ENCODE measurements at regions of chr13 and their contacts with region 1.

Region 1: DNA sequence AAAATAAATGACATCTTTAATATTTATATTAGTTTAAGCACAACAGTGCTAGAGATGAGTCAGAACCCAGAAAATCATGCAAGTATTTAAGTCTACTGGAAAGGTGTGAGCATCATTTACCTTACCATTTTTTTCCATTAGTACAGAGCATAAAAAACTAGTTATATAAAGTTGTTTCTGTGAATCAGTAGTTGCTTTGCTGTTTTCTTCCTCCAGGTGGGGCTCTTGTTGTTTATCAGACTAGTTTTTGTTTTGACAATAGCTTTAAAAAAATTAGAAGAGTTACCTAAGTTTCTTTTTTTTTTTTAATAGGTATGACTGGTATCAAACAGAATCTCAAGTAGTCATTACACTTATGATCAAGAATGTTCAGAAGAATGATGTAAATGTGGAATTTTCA is 12.7 kb downstream of the SUGT1 start:
- DNase-seq: peak in 2 of 4 experiments; percentile 7 to 8
- ATAC-seq: no peak
- H3K4me3 ChIP-seq: no peak overlapping the region
- H3K27ac ChIP-seq: no peak overlapping the region
- H3K4me1 ChIP-seq: no peaks in the 10 kb centered on the region
- H3K27me3 ChIP-seq: no peaks in the 10 kb centered on the region
- CTCF ChIP-seq: peak in 1 of 3 experiments; percentile 43; a peak in 2 of 6 replicates
- EP300 ChIP-seq: no peak
- POLR2A ChIP-seq: no peak
- RAD21 ChIP-seq: peak; percentile 33 to 47; a peak in 3 of 4 replicates

Region 2: DNA sequence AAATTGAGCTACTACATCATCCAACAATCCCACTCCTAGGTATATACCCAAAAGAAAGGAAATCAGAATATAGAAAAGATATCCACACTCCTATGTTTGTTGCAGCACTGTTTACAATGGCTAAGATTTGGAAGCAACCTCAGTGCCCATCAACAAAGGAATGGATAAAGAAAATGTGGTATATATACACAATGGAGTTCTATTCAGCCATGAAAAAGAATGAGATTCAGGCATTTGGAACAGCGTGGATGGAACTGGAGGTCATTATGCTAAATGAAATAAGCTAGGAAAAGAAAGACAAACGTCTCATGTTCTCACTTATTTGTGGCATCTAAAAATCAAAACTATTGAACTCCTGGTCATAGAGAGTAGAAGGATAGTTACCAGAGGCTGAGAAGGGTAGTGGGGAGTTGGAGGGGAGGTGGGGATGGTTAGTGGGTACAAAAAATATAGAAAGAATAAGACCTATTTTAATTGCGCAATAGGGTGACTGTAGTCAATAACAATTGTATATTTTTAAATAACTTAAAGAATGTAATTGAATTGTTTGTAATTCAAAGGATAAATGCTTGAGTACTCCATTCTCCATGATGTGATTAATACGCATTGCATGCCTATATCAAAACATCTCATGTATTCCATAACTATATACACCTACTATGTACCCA is 50.1 kb before region 1 on chr13:
- CTCF ChIA-PET with region 1: no interaction called
- POLR2A ChIA-PET with region 1: no interaction called
- in situ Hi-C with region 1: no loop called
- intact Hi-C with region 1: no loop called
- DNase-seq: no peak
- ATAC-seq: no peak
- H3K4me3 ChIP-seq: no peak overlapping the region
- H3K27ac ChIP-seq: no peak overlapping the region
- H3K4me1 ChIP-seq: no peaks in the 10 kb centered on the region; a peak in 2 of 5 replicates
- H3K27me3 ChIP-seq: no peaks in the 10 kb centered on the region
- CTCF ChIP-seq: no peak
- EP300 ChIP-seq: no peak
- POLR2A ChIP-seq: no peak
- RAD21 ChIP-seq: no peak

Region 3: DNA sequence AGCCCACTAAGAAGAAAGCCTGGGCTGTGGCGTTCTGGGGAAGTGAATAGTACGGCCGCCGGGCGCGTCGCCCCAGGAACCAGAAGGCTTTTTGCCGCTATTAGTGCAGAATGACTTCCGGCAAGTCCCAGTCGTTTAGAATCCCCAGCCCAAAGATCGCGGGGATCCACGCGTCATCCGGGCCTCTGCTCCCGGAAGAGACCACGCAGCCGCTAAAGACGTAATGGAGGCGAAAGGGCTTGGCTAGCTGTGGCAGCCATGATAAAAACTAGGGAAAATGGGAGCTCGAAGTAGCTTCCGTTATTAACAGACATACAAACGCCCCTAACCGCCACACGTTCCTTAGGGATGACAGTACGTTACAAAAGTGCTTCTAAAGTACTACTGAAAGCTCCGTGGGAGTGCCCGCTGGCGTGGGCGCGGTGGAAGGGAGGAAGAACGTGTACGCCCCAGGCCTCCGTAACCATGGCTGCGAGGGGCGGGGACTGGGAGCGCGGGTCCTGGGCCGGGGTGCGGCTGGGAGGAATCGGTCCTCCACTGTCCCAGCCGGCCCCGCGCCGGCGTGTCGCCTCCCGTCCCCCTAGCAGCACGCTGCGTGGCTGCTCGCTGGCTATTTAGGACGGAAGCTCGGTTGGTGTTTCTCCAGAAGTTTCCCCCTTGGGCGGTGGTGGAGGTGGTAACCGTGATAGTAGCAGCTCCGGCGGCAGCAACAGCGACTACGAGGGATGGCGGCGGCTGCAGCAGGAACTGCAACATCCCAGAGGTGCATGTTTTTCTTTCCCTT is 12.9 kb before region 1 on chr13 and contains the start of gene SUGT1:
- CTCF ChIA-PET with region 1: no interaction called
- POLR2A ChIA-PET with region 1: interaction called, 24 read pairs
- in situ Hi-C with region 1: no loop called
- intact Hi-C with region 1: no loop called
- DNase-seq: peak; percentile 79 to 95 (median 82)
- ATAC-seq: peak; percentile 96
- H3K4me3 ChIP-seq: peak within 1 kb of the TSS; percentile 66
- H3K27ac ChIP-seq: peak within 1 kb of the TSS; percentile 92
- H3K4me1 ChIP-seq: peaks cover 0 to 5% of the 10 kb centered on the region in 2 experiments; a peak in 1 of 5 replicates
- H3K27me3 ChIP-seq: no peaks in the 10 kb centered on the region
- CTCF ChIP-seq: peak; percentile 58 to 75 (median 70)
- EP300 ChIP-seq: no peak
- POLR2A ChIP-seq: peak; percentile 82
- RAD21 ChIP-seq: peak; percentile 5 to 18; a peak in 1 of 4 replicates
- polyA plus RNA-seq, gene SUGT1: 59.0 to 60.4 TPM

Region 4: DNA sequence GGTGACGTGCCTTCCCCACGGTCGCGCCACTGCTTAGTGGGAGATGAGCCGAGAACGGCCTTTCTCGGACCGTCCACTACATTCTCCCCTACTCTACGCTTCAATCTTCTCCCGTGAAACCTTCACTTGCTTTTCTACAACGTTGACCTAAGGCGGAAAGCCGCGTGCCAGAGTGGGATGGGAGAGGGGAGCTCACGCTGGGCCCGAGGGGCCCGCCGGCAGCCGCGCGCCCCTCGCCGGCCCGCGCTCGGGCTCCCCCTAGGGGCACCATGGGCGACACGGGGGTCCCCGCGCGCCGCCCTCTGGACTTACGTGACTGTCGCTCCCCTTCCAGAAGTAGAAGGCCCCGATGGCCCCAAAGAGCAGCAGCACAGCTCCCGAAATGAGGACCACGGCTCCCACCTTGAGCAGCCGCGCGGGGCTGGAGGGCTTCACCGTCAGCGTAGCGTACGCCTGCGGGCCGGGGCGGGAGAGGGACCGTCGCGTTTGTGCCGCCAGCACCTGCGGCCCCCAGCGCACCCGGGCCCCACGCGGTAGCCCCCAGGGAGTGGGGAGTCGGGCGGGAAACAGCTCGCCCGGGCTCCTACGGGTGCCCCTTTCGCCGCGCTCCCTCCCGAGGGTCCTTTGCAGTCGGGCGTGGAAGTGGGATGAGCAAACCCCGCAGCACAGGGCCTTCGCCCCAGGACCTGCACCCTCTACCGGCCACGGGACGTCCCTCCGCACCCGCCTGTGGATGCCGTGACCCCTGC is 73.6 kb after region 1 on chr13:
- CTCF ChIA-PET with region 1: no interaction called
- POLR2A ChIA-PET with region 1: no interaction called
- in situ Hi-C with region 1: no loop called
- intact Hi-C with region 1: loop called (anchors 5 kb)
- DNase-seq: peak; percentile 22 to 52 (median 47)
- ATAC-seq: peak; percentile 93
- H3K4me3 ChIP-seq: peak overlapping the region; percentile 18; the same call in 1 of the 2 replicates
- H3K27ac ChIP-seq: no peak overlapping the region
- H3K4me1 ChIP-seq: peaks cover 0 to 11% of the 10 kb centered on the region in 2 experiments; a peak in 2 of 5 replicates
- H3K27me3 ChIP-seq: peaks cover 0 to 18% of the 10 kb centered on the region in 2 experiments; a peak in 2 of 5 replicates
- CTCF ChIP-seq: peak; percentile 43 to 91 (median 55); a peak in 5 of 6 replicates
- EP300 ChIP-seq: no peak
- POLR2A ChIP-seq: no peak
- RAD21 ChIP-seq: peak in 1 of 2 experiments; percentile 39; a peak in 2 of 4 replicates

Region 5: DNA sequence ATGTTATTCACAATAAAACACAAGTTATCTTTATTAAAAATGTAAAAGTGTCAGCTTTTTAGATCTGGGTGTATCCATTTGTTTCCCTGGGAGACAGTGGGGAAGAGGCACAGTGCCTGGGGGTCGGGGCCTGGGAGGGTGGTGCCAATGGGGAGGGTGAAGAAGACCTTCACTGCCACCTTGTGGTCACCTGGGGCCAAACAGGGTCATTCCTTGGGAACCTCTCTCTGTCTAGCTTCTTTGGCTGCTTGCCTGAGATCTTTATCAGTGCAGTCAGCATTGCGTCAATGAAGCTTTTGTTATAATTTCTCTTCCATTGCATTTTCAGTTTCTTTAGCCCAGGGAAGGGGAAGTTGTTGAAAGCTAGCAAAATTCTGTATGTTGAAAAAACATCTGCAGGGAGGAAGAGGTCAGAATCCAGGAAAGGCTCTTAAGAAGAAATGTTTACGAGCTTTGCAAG is 144.0 kb after region 1 on chr13:
- CTCF ChIA-PET with region 1: interaction called, 12 read pairs
- POLR2A ChIA-PET with region 1: no interaction called
- in situ Hi-C with region 1: no loop called
- intact Hi-C with region 1: loop called (anchors 2 kb)
- DNase-seq: peak; percentile 82 to 87 (median 84)
- ATAC-seq: peak; percentile 94
- H3K4me3 ChIP-seq: no peak overlapping the region
- H3K27ac ChIP-seq: no peak overlapping the region
- H3K4me1 ChIP-seq: no peaks in the 10 kb centered on the region
- H3K27me3 ChIP-seq: no peaks in the 10 kb centered on the region; a peak in 1 of 5 replicates
- CTCF ChIP-seq: peak; percentile 68 to 75 (median 74)
- EP300 ChIP-seq: no peak
- POLR2A ChIP-seq: no peak
- RAD21 ChIP-seq: peak; percentile 62 to 73

Region 6: DNA sequence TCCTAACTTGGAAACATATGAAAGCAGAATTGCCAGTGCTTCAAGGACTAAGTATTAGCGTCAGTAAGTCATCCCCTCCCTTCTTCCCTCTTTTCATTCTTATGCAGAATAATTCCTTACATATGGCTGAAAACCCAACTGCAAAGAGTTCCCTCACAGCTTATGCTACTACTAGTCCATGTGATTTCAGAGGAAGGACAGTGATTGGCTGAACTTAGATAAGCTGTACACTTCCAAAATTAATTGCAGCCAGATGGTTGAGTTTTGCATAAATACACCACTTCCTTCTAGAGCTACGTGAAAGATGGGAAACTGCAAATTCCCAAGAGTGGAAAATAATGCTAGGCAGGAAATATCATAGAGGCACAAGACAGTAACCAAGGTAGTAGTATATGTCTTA is 1093.7 kb after region 1 on chr13:
- CTCF ChIA-PET with region 1: no interaction called
- POLR2A ChIA-PET with region 1: no interaction called
- in situ Hi-C with region 1: no loop called
- intact Hi-C with region 1: no loop called
- DNase-seq: no peak
- ATAC-seq: no peak
- H3K4me3 ChIP-seq: no peak overlapping the region
- H3K27ac ChIP-seq: no peak overlapping the region
- H3K4me1 ChIP-seq: no peaks in the 10 kb centered on the region
- H3K27me3 ChIP-seq: no peaks in the 10 kb centered on the region
- CTCF ChIP-seq: no peak
- EP300 ChIP-seq: no peak
- POLR2A ChIP-seq: no peak
- RAD21 ChIP-seq: no peak